Mammary epithelial cell (primary cell): ENCODE measurements at regions of chr22 and their contacts with region 1.

Region 1: GRCh38 chr22:22884010-22884887 is 3.4 kb upstream of the IGLL5 start:
- DNase-seq: peak; percentile 37
- H3K4me3 ChIP-seq: no peak overlapping the region
- H3K27ac ChIP-seq: no peak overlapping the region
- H3K4me1 ChIP-seq: no peaks in the 10 kb centered on the region
- H3K27me3 ChIP-seq: no peaks in the 10 kb centered on the region
- CTCF ChIP-seq: peak; percentile 45 to 74

Region 2: GRCh38 chr22:22587577-22588188 is 296.6 kb before region 1 on chr22:
- CTCF ChIA-PET with region 1: interaction called, 4 read pairs
- dilution Hi-C with region 1: no loop called
- in situ Hi-C with region 1: loop called in 1 of 2 experiments (anchors 25 kb)
- intact Hi-C with region 1: loop called (anchors 2 kb)
- DNase-seq: no peak
- H3K4me3 ChIP-seq: no peak overlapping the region
- H3K27ac ChIP-seq: no peak overlapping the region
- H3K4me1 ChIP-seq: no peaks in the 10 kb centered on the region
- H3K27me3 ChIP-seq: no peaks in the 10 kb centered on the region
- CTCF ChIP-seq: no peak

Region 3: DNA sequence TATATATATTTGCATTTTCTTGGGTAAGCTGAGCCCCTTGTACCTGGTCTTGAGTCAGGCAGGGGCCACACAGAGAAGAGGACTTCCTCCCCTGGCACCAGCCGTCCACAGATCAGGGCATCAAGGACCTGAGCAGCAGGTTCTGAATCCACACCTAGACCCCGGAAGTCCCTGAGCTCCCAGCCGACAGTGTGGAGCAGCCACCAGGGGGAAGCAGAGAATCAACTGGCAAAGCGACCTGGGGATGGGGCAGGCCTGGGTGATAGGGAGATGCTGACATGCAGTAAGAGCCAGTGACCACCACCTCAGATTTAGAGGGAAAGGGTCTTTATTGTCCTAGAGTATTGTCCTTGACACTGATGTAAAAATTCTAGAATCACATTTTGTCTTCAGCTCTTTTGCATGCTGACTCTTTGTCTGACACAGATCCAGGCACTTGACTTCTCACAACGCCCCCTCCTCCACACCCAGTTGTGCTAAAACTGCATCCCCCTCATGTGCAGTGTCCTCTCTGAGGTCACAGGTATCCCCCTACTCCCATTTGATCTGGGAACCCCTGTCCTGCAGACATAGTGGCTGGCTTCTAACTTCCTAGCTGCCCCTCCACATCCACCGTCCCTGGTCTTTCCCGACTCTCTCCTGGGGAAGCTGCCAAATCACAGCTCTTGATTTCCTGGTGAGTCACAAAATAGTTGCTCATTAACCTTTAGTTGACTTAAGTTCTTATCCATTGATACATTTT is 130.6 kb before region 1 on chr22:
- CTCF ChIA-PET with region 1: interaction called, 3 read pairs
- dilution Hi-C with region 1: no loop called
- in situ Hi-C with region 1: no loop called
- intact Hi-C with region 1: loop called (anchors 5 kb)
- DNase-seq: peak; percentile 5
- H3K4me3 ChIP-seq: no peak overlapping the region
- H3K27ac ChIP-seq: no peak overlapping the region
- H3K4me1 ChIP-seq: no peaks in the 10 kb centered on the region
- H3K27me3 ChIP-seq: no peaks in the 10 kb centered on the region
- CTCF ChIP-seq: peak; percentile 72 to 79

Region 4: DNA sequence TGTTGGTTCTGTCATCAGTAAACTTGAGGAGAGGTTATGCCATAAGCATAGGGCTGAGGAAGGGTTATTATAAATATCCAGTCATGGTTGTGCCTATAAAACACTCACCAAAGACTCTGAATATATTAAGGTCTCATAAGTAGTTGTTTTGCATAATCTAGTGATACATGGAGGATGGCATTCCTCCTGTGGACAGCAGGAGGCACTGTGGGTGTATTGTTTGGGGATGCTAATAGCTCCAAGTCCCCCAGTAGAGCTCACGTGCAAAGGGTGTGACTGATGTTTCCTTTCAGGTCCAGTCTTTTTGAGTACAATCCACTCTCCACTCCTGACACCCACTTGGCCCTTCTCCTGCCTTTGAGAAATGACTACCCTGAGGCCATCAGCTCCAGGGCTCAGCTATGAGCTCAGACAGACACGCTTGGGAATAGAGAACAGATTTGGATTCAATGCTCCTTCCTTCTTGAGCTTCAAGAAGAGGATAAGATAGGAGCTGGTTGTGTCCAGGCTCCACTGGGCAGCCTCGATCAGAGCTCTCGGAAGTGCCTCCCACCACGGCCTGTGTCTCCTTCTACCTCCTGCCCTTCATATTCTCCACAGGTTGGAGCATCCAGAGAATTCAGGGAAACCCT is 81.8 kb before region 1 on chr22:
- CTCF ChIA-PET with region 1: no interaction called
- dilution Hi-C with region 1: no loop called
- in situ Hi-C with region 1: no loop called
- intact Hi-C with region 1: loop called (anchors 10 kb)
- DNase-seq: no peak
- H3K4me3 ChIP-seq: no peak overlapping the region
- H3K27ac ChIP-seq: no peak overlapping the region
- H3K4me1 ChIP-seq: no peaks in the 10 kb centered on the region
- H3K27me3 ChIP-seq: no peaks in the 10 kb centered on the region
- CTCF ChIP-seq: peak; percentile 10 to 19

Region 5: DNA sequence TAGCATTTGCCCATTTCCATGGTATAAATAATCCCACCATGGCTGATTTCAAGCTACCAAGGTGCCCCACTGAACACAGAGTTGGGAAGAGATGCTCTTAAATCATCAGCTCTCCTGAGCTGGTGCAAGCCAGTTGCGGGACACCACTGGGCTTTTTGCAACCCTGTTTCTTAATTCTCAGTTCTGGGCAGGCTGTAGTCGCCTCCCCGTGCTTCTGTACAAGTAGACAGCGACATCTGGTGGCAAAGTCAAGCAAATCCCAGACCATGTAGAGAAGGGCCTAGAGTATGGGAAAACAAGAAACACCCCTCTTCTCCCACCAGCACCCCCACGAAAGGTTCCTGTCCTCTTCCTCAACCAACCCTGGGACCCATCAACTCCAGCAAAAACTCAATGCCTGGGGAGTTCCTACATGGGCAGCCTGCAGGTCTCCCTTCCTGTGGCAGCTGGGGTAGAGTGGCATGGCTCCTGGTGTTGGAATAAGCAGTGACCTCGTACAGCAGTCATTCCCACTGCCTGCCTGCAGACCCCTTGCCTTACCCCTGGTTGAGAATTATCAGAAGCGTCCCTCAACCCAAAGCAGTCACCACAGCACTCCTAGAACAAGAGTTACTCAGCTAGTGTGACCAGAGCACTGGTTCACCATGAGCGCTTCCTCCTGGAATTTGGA is 71.8 kb after region 1 on chr22:
- CTCF ChIA-PET with region 1: no interaction called
- dilution Hi-C with region 1: no loop called
- in situ Hi-C with region 1: no loop called
- intact Hi-C with region 1: no loop called
- DNase-seq: peak; percentile 41
- H3K4me3 ChIP-seq: no peak overlapping the region
- H3K27ac ChIP-seq: no peak overlapping the region
- H3K4me1 ChIP-seq: no peaks in the 10 kb centered on the region
- H3K27me3 ChIP-seq: no peaks in the 10 kb centered on the region
- CTCF ChIP-seq: peak; percentile 66 to 85

Region 6: DNA sequence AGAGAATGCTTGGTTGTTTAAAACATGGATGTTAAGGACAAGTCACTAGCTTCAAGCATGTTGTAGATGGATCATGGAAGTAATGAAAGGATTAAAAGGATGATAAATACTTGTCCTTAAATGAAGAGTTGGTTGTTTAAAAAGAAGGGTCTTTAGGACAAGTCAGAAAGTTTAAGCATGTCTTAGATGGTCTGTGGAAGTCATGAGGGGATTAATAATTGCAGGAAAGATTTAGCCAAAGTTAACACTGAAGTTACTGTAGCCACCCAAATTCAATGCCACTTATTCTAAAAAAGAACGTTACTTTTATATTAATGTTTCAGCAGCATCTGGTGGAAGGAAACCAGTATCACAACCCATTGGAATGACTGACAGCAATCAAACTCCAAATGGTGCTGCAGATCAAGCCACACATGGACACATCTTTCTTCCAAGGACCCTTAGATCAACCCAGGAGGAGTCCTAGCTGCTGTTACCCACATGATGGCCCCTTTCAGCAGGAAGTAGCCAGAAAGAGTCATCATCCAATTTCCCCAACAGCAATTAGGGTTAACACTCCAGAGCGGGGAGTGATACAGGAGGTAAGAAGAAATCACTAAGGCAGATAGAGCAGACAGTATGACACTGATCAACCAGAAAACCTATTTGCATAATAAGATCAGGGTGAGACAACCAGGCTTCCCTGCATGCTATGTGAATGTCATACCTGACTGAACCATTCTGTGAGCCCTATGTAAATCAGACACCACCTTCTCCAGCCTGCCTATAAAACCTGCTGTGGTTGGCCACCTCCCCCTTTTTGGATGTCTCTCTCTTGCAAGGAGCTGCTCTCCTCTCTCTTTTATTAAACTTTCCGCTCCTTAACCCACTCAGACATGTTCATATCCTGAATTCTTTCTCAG is 97.7 kb after region 1 on chr22:
- CTCF ChIA-PET with region 1: no interaction called
- dilution Hi-C with region 1: loop called (anchors 5 kb)
- in situ Hi-C with region 1: no loop called
- intact Hi-C with region 1: no loop called
- DNase-seq: no peak
- H3K4me3 ChIP-seq: no peak overlapping the region
- H3K27ac ChIP-seq: no peak overlapping the region
- H3K4me1 ChIP-seq: no peaks in the 10 kb centered on the region
- H3K27me3 ChIP-seq: no peaks in the 10 kb centered on the region
- CTCF ChIP-seq: no peak

Region 7: DNA sequence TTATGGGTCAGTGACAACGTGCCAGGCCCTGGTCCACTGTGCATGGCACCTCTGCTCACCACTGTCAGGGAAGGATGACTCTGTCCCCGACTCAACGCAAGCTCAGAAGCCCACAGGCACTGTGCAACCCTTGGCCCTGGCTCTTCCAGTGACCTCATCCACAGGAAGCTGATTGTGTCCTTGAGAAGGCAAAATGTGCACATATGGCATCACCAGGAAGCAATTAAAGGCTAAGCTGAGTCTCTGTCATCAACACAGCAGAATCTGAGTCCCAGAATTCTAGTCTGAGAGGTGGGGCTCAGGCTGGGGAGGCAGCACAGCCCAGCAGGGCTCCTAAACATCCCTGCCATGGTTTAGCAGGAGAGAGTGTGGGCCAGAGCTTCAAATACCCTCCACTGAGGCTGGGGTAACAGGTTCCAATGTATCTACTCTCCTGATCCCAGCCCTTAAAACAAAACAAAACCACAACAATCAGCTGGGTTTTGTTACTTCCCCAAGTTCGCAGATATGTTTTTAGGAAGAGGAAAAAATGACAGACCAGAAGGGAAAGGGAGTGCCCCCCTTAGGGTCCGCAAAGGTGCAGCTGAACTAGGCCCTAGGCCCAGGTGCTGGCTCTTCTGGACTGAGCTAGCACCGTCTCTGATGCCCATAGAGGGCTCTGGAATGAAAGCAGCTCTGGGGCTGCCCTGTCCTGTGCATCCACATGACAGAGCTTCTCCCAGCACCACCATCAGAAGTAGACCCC is 152.6 kb after region 1 on chr22:
- CTCF ChIA-PET with region 1: no interaction called
- dilution Hi-C with region 1: no loop called
- in situ Hi-C with region 1: no loop called
- intact Hi-C with region 1: no loop called
- DNase-seq: no peak
- H3K4me3 ChIP-seq: no peak overlapping the region
- H3K27ac ChIP-seq: no peak overlapping the region
- H3K4me1 ChIP-seq: no peaks in the 10 kb centered on the region
- H3K27me3 ChIP-seq: no peaks in the 10 kb centered on the region
- CTCF ChIP-seq: no peak